Right ventricle myocardium inferior (tissue), 1 donor: ENCODE measurements at regions of chr2 and their contacts with region 1.

Region 1: DNA sequence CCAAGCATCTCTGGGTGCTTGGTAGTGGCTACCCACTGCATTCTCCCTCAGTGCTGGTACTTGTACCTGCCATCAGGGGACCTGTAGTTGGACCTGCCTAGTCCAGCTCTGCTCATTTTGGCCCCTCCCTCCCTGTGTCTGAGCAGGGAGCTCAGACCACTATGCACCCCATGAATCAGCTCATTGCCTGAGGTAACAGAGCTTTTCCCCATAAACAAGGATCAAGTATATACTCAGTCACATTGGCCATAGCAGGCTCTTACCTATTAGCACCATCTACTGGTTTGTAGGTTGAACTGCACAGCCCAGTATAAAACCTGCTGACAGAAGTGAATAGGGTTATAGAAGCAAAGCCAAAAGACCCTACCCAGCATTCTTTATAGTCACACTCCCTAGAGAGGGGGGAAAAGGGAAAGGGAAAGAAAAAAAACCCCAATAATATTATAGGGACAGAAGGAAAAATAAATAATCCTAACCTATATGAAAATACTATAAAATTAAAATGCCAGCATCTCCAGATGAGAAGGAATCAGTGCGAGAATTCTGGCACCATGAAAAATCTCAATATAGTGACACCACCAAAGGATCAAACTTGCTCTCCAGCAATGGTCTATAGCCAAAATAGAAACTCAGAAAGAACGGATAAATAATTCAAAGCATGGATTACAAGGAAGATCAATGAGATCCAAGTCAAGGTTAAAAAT is 6.9 kb upstream of the FLACC1 start:
- DNase-seq: no peak
- ATAC-seq: peak; percentile 60

Region 2: DNA sequence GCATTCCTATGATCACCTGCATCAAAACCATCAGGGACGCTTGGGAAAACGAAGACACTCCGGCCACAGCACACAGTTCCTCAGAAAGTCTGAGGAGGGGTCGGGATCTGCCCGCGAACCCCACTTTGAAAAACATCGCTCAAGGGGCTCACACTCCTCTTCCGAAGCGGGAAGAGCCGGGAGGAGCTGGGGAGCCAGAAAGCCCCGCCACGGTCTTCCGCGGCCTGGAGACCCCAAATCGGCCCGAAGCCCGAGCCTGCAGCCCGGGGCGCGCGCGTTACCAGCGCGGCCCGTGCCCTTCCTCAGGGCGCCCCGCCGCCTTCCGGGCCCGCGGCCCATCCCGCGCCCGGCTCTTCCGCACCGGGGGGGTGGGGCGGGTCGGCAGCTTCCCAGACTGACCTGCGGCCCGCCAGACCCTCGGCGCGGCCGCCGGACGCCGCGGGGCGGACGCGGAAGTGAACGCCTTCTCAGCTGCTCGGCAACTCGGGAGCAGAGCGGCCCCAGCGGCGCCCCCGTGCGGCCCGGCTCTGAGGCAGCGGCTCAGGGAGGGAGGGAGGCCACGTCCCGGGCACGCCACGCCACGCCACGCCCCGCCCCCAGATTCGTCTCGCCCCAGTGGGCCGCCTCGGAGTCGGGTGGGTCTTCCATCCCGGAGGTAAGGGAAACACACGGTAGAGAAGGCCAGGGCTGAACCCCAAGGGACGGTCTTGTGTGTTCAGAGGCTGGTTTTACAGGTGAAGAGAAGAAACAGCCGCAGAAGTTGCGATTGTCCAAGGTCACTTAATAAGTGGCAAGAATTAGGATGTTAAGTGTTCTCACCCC is 854.2 kb before region 1 on chr2 and contains the start of gene KCTD18:
- intact Hi-C with region 1: no loop called
- DNase-seq: peak; percentile 97
- ATAC-seq: peak; percentile 99
- total RNA-seq, gene KCTD18: 9.8 TPM

Region 3: GRCh38 chr2:200640901-200641300 is 723.1 kb before region 1 on chr2:
- intact Hi-C with region 1: no loop called
- DNase-seq: no peak
- ATAC-seq: no peak

Region 4: GRCh38 chr2:201257956-201258665 is 105.9 kb before region 1 on chr2:
- intact Hi-C with region 1: loop called (anchors 5 kb)
- DNase-seq: peak; percentile 79
- ATAC-seq: peak; percentile 77

Region 5: GRCh38 chr2:201383156-201383555 is 19.1 kb after region 1 on chr2:
- intact Hi-C with region 1: no loop called
- DNase-seq: no peak
- ATAC-seq: peak; percentile 39